Transverse colon (tissue), 4 donors: ENCODE measurements at regions of chr2 and their contacts with region 1.

Region 1: GRCh38 chr2:2050446-2050845 is 280.6 kb downstream of the MYT1L start:
- DNase-seq: no peak
- H3K4me3 ChIP-seq: no peak overlapping the region
- H3K27ac ChIP-seq: no peak overlapping the region
- H3K4me1 ChIP-seq: no peaks in the 10 kb centered on the region
- H3K27me3 ChIP-seq: no peaks in the 10 kb centered on the region
- CTCF ChIP-seq: no peak
- EP300 ChIP-seq: no peak
- POLR2A ChIP-seq: no peak

Region 2: DNA sequence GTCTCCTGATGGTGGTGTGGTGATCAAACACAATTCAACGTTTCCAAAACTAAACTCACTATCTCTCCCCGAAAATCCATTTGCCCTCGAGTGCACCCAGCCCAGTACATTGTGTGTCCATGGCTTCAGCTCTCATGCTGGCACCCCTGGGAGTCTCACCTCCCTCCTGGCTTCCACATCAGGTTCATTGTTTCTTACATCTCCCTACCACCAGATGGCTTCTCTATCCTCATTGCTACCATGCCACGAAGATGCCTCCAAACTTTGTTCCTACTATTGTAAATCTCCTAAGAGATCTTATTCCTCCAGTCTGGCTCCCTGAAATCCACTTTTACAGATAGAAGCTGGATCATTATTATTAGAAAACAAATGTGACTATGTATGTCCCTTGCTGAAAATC is 83.6 kb after region 1 on chr2:
- in situ Hi-C with region 1: no loop called
- intact Hi-C with region 1: no loop called
- DNase-seq: no peak
- H3K4me3 ChIP-seq: no peak overlapping the region
- H3K27ac ChIP-seq: no peak overlapping the region
- H3K4me1 ChIP-seq: no peaks in the 10 kb centered on the region
- H3K27me3 ChIP-seq: no peaks in the 10 kb centered on the region
- CTCF ChIP-seq: no peak
- EP300 ChIP-seq: no peak
- POLR2A ChIP-seq: no peak

Region 3: GRCh38 chr2:2184549-2185249 is 134.3 kb after region 1 on chr2:
- in situ Hi-C with region 1: no loop called
- intact Hi-C with region 1: loop called (anchors 5 kb)
- DNase-seq: no peak
- H3K4me3 ChIP-seq: no peak overlapping the region
- H3K27ac ChIP-seq: no peak overlapping the region
- H3K4me1 ChIP-seq: no peaks in the 10 kb centered on the region
- H3K27me3 ChIP-seq: no peaks in the 10 kb centered on the region
- CTCF ChIP-seq: no peak
- EP300 ChIP-seq: no peak
- POLR2A ChIP-seq: no peak

Region 4: GRCh38 chr2:2253172-2254016 is 202.9 kb after region 1 on chr2:
- in situ Hi-C with region 1: no loop called
- intact Hi-C with region 1: no loop called
- DNase-seq: no peak
- H3K4me3 ChIP-seq: no peak overlapping the region
- H3K27ac ChIP-seq: no peak overlapping the region
- H3K4me1 ChIP-seq: no peaks in the 10 kb centered on the region
- H3K27me3 ChIP-seq: no peaks in the 10 kb centered on the region
- CTCF ChIP-seq: no peak
- EP300 ChIP-seq: no peak
- POLR2A ChIP-seq: no peak